ENCODE measurements at regions of chr7 and their contacts with region 1.

Region 1: GRCh38 chr7:229184-229964 is 37.0 kb downstream of the FAM20C start:
- DNase-seq: peak; percentile 93 to 94
- ATAC-seq: peak; percentile 87
- H3K4me3 ChIP-seq: no peak overlapping the region
- H3K27ac ChIP-seq: peak overlapping the region in 1 of 2 donors; percentile 69
- H3K4me1 ChIP-seq: no peaks in the 10 kb centered on the region
- H3K27me3 ChIP-seq: no peaks in the 10 kb centered on the region

Region 2: GRCh38 chr7:191981-192649 is 37.3 kb before region 1 on chr7 and contains the start of gene FAM20C:
- intact Hi-C with region 1: loop called in 1 of 2 experiments (anchors 5 kb)
- DNase-seq: peak; percentile 94 to 96
- ATAC-seq: peak; percentile 89
- H3K4me3 ChIP-seq: peak within 1 kb of the TSS; percentile 75 to 86
- H3K27ac ChIP-seq: peak within 1 kb of the TSS in 1 of 2 donors; percentile 38
- H3K4me1 ChIP-seq: no peaks in the 10 kb centered on the region
- H3K27me3 ChIP-seq: no peaks in the 10 kb centered on the region
- total RNA-seq, gene FAM20C: 88.3 to 104 TPM

Measured in aorta (tissue), 5 donors.